MCF 10A (cell line): ENCODE measurements at regions of chr4 and their contacts with region 1.

Region 1: DNA sequence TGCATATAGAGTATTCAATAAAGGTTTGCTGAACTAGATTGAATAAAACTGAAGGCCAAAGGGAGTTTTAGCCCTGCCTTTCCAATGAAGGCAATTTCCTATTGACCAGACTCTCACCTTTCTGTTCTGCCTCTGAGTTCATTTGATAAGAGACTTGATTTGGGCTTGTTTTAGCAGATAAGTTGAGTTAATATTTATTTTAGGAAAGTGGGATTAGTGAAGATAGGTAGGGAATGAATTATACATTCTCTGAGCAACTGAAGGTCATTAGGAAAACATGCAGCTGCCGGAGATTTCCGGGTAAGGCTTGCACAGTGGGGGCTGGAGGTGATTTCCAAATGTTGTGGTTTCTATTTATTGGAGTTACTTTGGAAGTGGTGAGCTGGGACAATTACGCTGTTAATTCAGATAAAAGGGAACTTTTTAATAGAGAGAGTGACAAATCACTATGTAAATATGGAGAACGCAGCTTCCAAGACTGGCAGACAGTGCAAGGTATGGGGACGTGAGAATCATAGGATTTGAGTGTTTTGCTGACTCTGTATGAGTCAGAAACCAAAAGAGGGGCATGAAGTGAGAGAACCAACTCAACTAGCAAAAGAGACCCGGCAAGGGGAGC is 553.6 kb upstream of the BOD1L1 start:
- DNase-seq: peak; percentile 18
- H3K4me3 Mint-ChIP-seq: no peak overlapping the region
- H3K27ac Mint-ChIP-seq: no peak overlapping the region
- H3K4me1 Mint-ChIP-seq: no peaks in the 10 kb centered on the region
- H3K27me3 Mint-ChIP-seq: no peaks in the 10 kb centered on the region
- CTCF ChIP-seq: no peak

Region 2: GRCh38 chr4:14168919-14169318 is 12.2 kb before region 1 on chr4:
- CTCF ChIA-PET with region 1: no interaction called
- POLR2A ChIA-PET with region 1: interaction called, 13 read pairs
- intact Hi-C with region 1: no loop called
- DNase-seq: peak; percentile 96
- H3K4me3 Mint-ChIP-seq: no peak overlapping the region
- H3K27ac Mint-ChIP-seq: no peak overlapping the region
- H3K4me1 Mint-ChIP-seq: peaks cover 20% of the 10 kb centered on the region
- H3K27me3 Mint-ChIP-seq: no peaks in the 10 kb centered on the region
- CTCF ChIP-seq: no peak

Region 3: DNA sequence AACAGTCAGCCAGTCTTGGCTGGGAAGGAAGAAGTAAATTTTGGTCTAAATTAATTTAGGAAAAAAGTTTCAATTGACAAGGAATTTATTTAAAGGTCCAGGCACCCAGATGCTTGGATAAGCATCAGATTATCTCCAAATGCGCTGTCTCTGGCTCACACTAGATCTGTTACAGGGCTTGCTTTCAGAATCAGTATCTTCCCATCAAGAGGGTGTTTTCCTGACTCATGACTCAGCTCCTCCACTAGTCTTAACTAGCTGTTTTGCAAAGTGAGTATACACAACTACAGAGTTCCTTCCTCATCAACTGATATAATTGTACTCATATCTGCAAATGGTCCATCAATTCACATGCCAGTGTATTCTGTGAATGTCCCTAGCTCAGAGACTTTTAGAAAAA is 339.1 kb after region 1 on chr4:
- CTCF ChIA-PET with region 1: no interaction called
- POLR2A ChIA-PET with region 1: no interaction called
- intact Hi-C with region 1: no loop called
- DNase-seq: peak; percentile 12
- H3K4me3 Mint-ChIP-seq: no peak overlapping the region
- H3K27ac Mint-ChIP-seq: no peak overlapping the region
- H3K4me1 Mint-ChIP-seq: no peaks in the 10 kb centered on the region
- H3K27me3 Mint-ChIP-seq: no peaks in the 10 kb centered on the region
- CTCF ChIP-seq: no peak